ENCODE measurements at regions of chr3 and their contacts with region 1.

Region 1: DNA sequence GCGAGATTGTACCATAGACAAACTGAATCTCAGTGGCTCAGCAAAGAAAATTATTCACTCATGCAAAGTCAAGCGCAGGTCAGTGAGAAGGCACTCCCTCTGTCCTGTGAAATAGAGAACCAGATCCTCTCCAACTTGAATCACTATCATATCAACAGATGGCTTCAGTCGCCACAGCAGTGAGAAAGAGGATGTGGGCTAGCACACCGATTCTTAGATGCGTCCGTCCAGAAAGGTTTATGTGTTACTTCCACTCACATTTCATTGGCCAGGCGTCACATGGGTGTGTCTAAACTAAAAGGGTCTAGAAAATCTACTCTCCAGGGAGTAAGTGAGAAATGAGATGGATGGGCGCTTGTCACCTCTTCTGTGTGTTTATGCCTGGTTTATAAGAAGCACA is 141.6 kb upstream of the KBTBD8 start:
- DNase-seq: no peak
- H3K4me3 ChIP-seq: no peak overlapping the region
- H3K27ac ChIP-seq: no peak overlapping the region
- H3K4me1 ChIP-seq: peaks cover 0 to 4% (median under 1%) of the 10 kb centered on the region in 4 experiments; a peak in 2 of 7 replicates
- H3K27me3 ChIP-seq: no peaks in the 10 kb centered on the region; a peak in 1 of 7 replicates
- CTCF ChIP-seq: no peak
- EP300 ChIP-seq: no peak
- POLR2A ChIP-seq: no peak
- RAD21 ChIP-seq: no peak

Region 2: DNA sequence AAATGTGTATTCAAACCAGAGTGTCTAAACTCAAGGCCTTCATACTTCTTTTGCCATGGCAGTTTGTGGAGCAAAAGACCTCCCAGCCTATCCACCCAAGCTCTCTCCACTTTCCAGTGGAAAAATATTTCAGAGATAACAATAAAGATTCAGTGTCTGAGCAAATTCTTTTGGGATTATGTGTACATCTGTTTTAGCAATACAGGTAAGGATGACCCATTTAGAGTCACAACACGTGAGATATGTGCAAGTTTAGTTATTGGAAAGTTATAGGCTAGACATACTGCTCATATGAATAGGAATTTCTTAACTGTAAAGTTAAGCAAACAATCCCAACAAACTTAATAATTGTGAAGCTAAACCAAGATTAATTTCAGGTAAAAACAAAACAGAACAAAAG is 181.2 kb before region 1 on chr3:
- CTCF ChIA-PET with region 1: no interaction called
- POLR2A ChIA-PET with region 1: no interaction called
- DNase-seq: no peak
- H3K4me3 ChIP-seq: no peak overlapping the region
- H3K27ac ChIP-seq: no peak overlapping the region
- H3K4me1 ChIP-seq: no peaks in the 10 kb centered on the region
- H3K27me3 ChIP-seq: no peaks in the 10 kb centered on the region
- CTCF ChIP-seq: no peak
- EP300 ChIP-seq: no peak
- POLR2A ChIP-seq: no peak
- RAD21 ChIP-seq: no peak

Region 3: GRCh38 chr3:66836363-66837152 is 20.0 kb before region 1 on chr3:
- CTCF ChIA-PET with region 1: interaction called, 19 read pairs
- POLR2A ChIA-PET with region 1: no interaction called
- DNase-seq: no peak
- H3K4me3 ChIP-seq: no peak overlapping the region
- H3K27ac ChIP-seq: no peak overlapping the region
- H3K4me1 ChIP-seq: no peaks in the 10 kb centered on the region
- H3K27me3 ChIP-seq: peaks cover 0 to 1% (median 0%) of the 10 kb centered on the region in 4 experiments; a peak in 1 of 7 replicates
- CTCF ChIP-seq: no peak
- EP300 ChIP-seq: no peak
- POLR2A ChIP-seq: no peak
- RAD21 ChIP-seq: peak in 1 of 2 experiments; percentile 36; a peak in 3 of 4 replicates

Region 4: DNA sequence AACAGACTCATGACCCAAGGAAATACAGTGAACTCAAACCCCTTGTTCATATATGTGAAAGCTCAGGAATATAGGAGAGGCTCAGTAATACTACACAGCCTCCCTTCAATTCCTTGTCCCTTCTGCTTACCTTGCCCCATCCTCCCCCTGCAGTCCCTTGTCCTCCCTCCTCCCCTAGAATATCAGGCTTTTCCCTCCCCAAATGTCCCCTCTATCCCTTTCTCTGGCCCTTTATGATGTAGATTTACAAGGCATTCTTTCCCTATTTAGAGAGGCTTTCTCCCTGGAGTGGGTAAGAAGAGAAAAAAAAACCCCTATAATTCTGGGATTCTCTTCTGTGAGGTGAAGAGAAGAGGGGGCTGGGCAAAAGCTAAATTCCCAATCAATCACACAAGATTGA is 76.7 kb after region 1 on chr3:
- CTCF ChIA-PET with region 1: interaction called, 14 read pairs
- POLR2A ChIA-PET with region 1: no interaction called
- DNase-seq: peak in 1 of 2 experiments; percentile 46
- H3K4me3 ChIP-seq: no peak overlapping the region
- H3K27ac ChIP-seq: no peak overlapping the region
- H3K4me1 ChIP-seq: peaks cover 6 to 26% (median 11%) of the 10 kb centered on the region in 4 experiments
- H3K27me3 ChIP-seq: no peaks in the 10 kb centered on the region
- CTCF ChIP-seq: no peak
- EP300 ChIP-seq: peak in 1 of 2 experiments; percentile 54; a peak in 1 of 3 replicates
- POLR2A ChIP-seq: no peak
- RAD21 ChIP-seq: no peak

Region 5: GRCh38 chr3:67067251-67067650 is 210.7 kb after region 1 on chr3:
- CTCF ChIA-PET with region 1: no interaction called
- POLR2A ChIA-PET with region 1: no interaction called
- DNase-seq: no peak
- H3K4me3 ChIP-seq: no peak overlapping the region
- H3K27ac ChIP-seq: no peak overlapping the region
- H3K4me1 ChIP-seq: no peaks in the 10 kb centered on the region
- H3K27me3 ChIP-seq: no peaks in the 10 kb centered on the region; a peak in 1 of 7 replicates
- CTCF ChIP-seq: no peak
- EP300 ChIP-seq: no peak
- POLR2A ChIP-seq: no peak
- RAD21 ChIP-seq: no peak

Region 6: GRCh38 chr3:67176396-67176795 is 319.9 kb after region 1 on chr3:
- CTCF ChIA-PET with region 1: no interaction called
- POLR2A ChIA-PET with region 1: no interaction called
- DNase-seq: no peak
- H3K4me3 ChIP-seq: no peak overlapping the region
- H3K27ac ChIP-seq: no peak overlapping the region
- H3K4me1 ChIP-seq: no peaks in the 10 kb centered on the region
- H3K27me3 ChIP-seq: no peaks in the 10 kb centered on the region
- CTCF ChIP-seq: no peak
- EP300 ChIP-seq: no peak
- POLR2A ChIP-seq: no peak
- RAD21 ChIP-seq: no peak